Activated naive CD4-positive, alpha-beta T cell treated with anti-CD3 and anti-CD28 coated beads for 36 hours (primary cell): ENCODE measurements at regions of chr2 and their contacts with region 1.

Region 1: DNA sequence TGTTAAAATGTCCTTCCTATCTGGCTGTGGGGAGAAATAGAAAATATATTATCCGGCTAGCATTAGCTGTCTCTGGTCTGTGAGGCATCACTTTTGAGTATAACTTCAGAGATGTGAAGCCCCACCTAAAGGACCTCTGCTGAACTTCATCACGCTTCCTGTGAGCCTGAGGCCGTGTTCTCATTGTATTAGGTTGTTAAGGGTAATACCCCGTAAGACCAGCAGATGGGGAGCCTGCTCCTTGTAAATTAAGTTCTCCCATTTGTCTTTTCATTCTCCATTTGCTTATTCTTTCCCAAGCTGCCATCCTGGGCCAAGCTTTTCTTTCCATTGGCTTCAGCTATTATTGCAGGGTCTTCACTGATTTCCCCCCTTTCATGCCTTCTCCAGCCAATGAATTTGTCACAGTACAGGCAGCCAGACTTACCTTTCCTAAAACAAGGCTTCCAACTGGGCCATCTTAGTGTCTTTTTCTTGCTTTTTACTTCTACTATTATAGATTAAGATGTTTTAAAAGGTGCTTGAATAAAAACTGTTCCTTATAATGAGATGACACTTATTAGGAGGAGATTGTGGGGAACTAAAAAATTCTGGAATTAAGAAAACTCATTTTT is 12.4 kb downstream of the NIF3L1 start:
- DNase-seq: peak; percentile 89
- H3K4me3 Mint-ChIP-seq: no peak overlapping the region
- H3K27ac Mint-ChIP-seq: peak overlapping the region; percentile 84
- H3K4me1 Mint-ChIP-seq: peaks cover 7% of the 10 kb centered on the region
- H3K27me3 Mint-ChIP-seq: no peaks in the 10 kb centered on the region

Region 2: GRCh38 chr2:200578778-200579177 is 322.8 kb before region 1 on chr2:
- CTCF ChIA-PET with region 1: no interaction called
- intact Hi-C with region 1: loop called (anchors 2 kb)
- DNase-seq: peak; percentile 18
- H3K4me3 Mint-ChIP-seq: no peak overlapping the region
- H3K27ac Mint-ChIP-seq: peak overlapping the region; percentile 16
- H3K4me1 Mint-ChIP-seq: peaks cover 14% of the 10 kb centered on the region
- H3K27me3 Mint-ChIP-seq: no peaks in the 10 kb centered on the region

Region 3: GRCh38 chr2:201158111-201158929 is 256.8 kb after region 1 on chr2:
- CTCF ChIA-PET with region 1: interaction called, 6 read pairs
- intact Hi-C with region 1: loop called (anchors 1 kb)
- DNase-seq: peak; percentile 76
- H3K4me3 Mint-ChIP-seq: no peak overlapping the region
- H3K27ac Mint-ChIP-seq: peak overlapping the region; percentile 86
- H3K4me1 Mint-ChIP-seq: peaks cover 24% of the 10 kb centered on the region
- H3K27me3 Mint-ChIP-seq: no peaks in the 10 kb centered on the region

Region 4: GRCh38 chr2:201176081-201176481 is 274.5 kb after region 1 on chr2:
- CTCF ChIA-PET with region 1: interaction called, 24 read pairs
- intact Hi-C with region 1: loop called (anchors 1 kb)
- DNase-seq: no peak
- H3K4me3 Mint-ChIP-seq: no peak overlapping the region
- H3K27ac Mint-ChIP-seq: no peak overlapping the region
- H3K4me1 Mint-ChIP-seq: peaks cover 5% of the 10 kb centered on the region
- H3K27me3 Mint-ChIP-seq: no peaks in the 10 kb centered on the region

Region 5: DNA sequence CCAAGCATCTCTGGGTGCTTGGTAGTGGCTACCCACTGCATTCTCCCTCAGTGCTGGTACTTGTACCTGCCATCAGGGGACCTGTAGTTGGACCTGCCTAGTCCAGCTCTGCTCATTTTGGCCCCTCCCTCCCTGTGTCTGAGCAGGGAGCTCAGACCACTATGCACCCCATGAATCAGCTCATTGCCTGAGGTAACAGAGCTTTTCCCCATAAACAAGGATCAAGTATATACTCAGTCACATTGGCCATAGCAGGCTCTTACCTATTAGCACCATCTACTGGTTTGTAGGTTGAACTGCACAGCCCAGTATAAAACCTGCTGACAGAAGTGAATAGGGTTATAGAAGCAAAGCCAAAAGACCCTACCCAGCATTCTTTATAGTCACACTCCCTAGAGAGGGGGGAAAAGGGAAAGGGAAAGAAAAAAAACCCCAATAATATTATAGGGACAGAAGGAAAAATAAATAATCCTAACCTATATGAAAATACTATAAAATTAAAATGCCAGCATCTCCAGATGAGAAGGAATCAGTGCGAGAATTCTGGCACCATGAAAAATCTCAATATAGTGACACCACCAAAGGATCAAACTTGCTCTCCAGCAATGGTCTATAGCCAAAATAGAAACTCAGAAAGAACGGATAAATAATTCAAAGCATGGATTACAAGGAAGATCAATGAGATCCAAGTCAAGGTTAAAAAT is 462.4 kb after region 1 on chr2:
- CTCF ChIA-PET with region 1: no interaction called
- intact Hi-C with region 1: loop called (anchors 2 kb)
- DNase-seq: peak; percentile 48
- H3K4me3 Mint-ChIP-seq: no peak overlapping the region
- H3K27ac Mint-ChIP-seq: no peak overlapping the region
- H3K4me1 Mint-ChIP-seq: peaks cover 13% of the 10 kb centered on the region
- H3K27me3 Mint-ChIP-seq: no peaks in the 10 kb centered on the region